Lower lobe of right lung (tissue), 2 donors: ENCODE measurements at regions of chr18 and their contacts with region 1.

Region 1: DNA sequence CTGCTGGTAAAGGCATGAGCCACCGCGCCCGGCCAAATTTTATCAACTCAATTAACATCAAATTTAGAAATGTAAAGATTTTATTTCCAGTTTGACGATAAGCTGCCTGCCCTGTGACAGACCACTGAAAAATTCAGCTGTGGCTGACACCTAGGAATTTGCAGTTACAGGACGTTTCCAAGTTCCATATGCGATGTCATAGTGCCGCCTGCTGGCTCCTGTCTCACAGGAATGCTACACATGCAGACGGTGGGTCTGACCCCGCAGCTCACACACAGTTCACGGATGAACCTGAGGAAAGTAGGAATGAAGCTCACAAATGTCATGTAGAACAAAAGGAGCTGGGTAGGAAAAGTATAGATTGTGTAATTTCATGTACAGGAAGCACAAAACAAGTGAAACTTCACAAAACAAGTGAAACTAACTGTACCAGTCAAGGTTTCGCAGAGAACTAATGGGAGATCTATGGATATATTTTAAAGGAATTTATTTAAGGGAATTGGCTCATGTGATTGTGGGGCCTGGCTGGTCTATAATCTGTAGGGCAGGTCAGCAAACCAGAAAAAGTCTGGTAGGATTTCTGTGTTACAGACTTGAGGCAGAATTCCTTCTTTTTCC is 13.2 kb upstream of the SEH1L start:
- DNase-seq: peak; percentile 86
- ATAC-seq: peak; percentile 88 to 95
- H3K4me3 ChIP-seq: no peak overlapping the region
- H3K27ac ChIP-seq: no peak overlapping the region
- H3K4me1 ChIP-seq: no peaks in the 10 kb centered on the region
- H3K27me3 ChIP-seq: no peaks in the 10 kb centered on the region
- CTCF ChIP-seq: peak; percentile 88

Region 2: GRCh38 chr18:12606592-12607315 is 327.8 kb before region 1 on chr18:
- intact Hi-C with region 1: no loop called
- DNase-seq: no peak
- ATAC-seq: peak; percentile 72 to 82
- H3K4me3 ChIP-seq: no peak overlapping the region
- H3K27ac ChIP-seq: peak overlapping the region; percentile 66
- H3K4me1 ChIP-seq: peaks cover 21% of the 10 kb centered on the region
- H3K27me3 ChIP-seq: no peaks in the 10 kb centered on the region
- CTCF ChIP-seq: no peak

Region 3: DNA sequence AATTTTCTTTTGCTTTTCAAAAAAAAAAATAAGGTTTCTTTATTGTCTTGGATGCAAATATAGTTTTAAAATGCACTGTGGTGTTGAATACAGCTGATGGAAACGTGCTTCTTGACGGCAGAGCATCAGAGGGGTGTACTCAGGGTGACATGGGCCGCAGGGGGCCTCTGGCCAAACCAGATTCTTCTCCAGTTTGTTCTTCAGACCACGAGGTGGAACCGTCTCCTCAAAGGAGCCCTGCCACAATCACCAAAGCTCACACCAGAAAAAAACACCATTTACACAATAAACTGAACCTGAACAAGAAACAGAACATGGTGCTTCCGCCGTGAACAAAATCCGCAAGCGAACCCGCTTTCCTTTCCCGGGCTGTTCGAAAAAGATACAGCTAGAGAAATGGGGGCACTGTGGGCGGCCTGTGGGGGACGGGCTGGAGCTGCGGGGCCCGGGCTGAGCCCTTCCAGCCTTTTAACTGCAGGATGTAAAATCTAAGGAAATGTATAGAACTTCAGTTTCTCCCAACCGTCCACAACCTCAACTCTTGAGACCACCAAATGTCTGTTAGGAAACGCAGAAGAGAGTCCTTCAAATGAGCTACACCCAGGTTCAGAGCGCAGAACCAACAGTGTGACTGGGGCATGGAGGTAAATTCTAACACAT is 197.2 kb before region 1 on chr18:
- intact Hi-C with region 1: loop called (anchors 10 kb)
- DNase-seq: no peak
- ATAC-seq: no peak
- H3K4me3 ChIP-seq: no peak overlapping the region
- H3K27ac ChIP-seq: no peak overlapping the region
- H3K4me1 ChIP-seq: no peaks in the 10 kb centered on the region
- H3K27me3 ChIP-seq: no peaks in the 10 kb centered on the region
- CTCF ChIP-seq: no peak